Panc1 (cell line): ENCODE measurements at regions of chr3 and their contacts with region 1.

Region 1: DNA sequence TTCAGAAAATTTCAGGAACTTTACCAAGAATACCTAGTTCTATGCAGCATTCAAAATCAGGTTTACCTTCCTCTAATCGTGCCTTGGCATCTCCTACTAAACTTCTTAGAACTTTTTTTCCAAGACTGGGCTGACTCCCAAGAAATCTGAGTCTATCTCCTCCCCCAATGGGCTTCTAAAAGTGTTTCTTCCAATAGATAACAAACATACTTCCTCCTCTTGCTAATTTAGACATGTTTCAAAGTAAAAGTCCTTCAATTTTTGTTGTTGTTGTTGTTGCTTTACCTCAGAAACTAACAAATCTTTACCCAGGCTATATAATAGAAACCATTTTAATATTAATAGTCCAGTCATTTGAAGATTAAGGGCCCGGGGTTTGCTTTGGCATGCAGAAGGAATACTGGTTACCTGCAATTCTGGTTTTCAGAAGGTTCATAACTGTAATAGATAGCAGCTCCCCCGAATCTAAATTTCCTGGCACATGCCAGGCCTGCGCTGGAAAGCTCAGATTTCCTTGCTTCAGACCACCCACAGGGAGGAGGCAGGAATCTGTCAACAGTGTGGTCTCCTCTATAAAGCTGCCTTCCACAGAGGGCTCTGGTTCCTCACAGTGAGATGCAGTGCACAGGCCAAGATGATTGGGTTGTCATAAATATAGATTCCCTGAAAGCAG is 188.7 kb downstream of the THRB start:
- DNase-seq: no peak
- ATAC-seq: no peak
- H3K4me3 ChIP-seq: no peak overlapping the region
- H3K27ac ChIP-seq: no peak overlapping the region
- H3K4me1 ChIP-seq: no peaks in the 10 kb centered on the region
- H3K27me3 ChIP-seq: no peaks in the 10 kb centered on the region
- CTCF ChIP-seq: no peak

Region 2: GRCh38 chr3:24645047-24645446 is 339.1 kb after region 1 on chr3:
- CTCF ChIA-PET with region 1: no interaction called
- POLR2A ChIA-PET with region 1: interaction called, 12 read pairs
- in situ Hi-C with region 1: no loop called
- intact Hi-C with region 1: no loop called
- DNase-seq: no peak
- ATAC-seq: no peak
- H3K4me3 ChIP-seq: no peak overlapping the region
- H3K27ac ChIP-seq: no peak overlapping the region
- H3K4me1 ChIP-seq: no peaks in the 10 kb centered on the region
- H3K27me3 ChIP-seq: no peaks in the 10 kb centered on the region
- CTCF ChIP-seq: no peak